Dorsolateral prefrontal cortex (tissue), 120 donors: ENCODE measurements at regions of chr2 and their contacts with region 1.

Region 1: DNA sequence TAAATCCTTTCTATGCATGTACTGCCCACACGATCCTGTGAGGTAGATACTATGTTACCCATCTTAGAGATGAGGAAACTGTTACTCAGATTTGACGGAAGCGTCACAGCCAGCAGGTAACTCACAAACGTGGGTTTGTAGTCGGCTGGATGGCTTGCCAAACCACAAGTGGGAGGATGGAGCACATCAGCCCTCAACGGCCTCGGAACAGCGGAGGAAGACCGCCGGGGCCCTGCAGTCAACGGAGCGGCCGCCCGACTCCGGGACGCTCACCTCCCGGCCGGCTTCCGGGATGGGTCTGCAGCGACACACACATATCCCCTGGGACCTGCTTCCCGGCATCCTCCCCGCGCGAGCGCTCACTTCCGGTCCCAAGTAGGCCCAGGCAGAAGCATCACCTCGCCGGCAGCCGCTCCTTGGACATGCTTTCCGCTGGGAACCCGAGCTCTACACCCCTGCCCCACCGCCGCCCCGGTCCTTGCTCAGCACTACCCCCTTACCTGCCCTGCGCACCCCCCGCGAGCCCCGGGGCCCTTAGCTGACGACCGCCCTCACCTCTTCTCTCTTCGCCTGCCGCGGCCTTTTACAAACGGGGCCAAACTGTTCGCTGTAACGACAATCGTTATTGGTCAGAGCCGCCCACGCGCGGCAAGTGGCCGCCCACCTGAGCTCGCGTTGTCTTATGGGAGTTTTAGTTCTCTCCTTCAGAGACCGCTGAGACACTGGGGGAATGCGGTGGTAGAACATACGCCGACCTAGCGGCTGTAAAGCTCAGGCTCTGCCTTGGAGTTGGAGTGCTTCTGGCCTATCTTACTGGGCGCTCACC is at the start of gene C2orf42:
- DNase-seq: peak; percentile 93 to 98 (median 96)
- H3K4me3 ChIP-seq: peak within 1 kb of the TSS; percentile 45 to 99 (median 86)
- H3K27ac ChIP-seq: peak within 1 kb of the TSS; percentile 87 to 99 (median 96)
- H3K27me3 ChIP-seq: no peaks in the 10 kb centered on the region
- CTCF ChIP-seq: peak in 30 of 56 donors; percentile 7 to 51 (median 22)
- total RNA-seq, gene C2orf42: 20.6 to 44.6 (median 32.0) TPM

Region 2: GRCh38 chr2:70086838-70087701 is 103.6 kb before region 1 on chr2 and contains the start of gene PCBP1:
- intact Hi-C with region 1: loop called in 1 of 2 experiments (anchors 2 kb)
- DNase-seq: peak; percentile 81 to 92 (median 88)
- H3K4me3 ChIP-seq: peak within 1 kb of the TSS; percentile 61 to 99 (median 92)
- H3K27ac ChIP-seq: peak within 1 kb of the TSS; percentile 100
- H3K27me3 ChIP-seq: no peaks in the 10 kb centered on the region
- CTCF ChIP-seq: peak in 2 of 56 donors; percentile 6 to 8
- total RNA-seq, gene PCBP1: 118 to 237 (median 174) TPM

Region 3: DNA sequence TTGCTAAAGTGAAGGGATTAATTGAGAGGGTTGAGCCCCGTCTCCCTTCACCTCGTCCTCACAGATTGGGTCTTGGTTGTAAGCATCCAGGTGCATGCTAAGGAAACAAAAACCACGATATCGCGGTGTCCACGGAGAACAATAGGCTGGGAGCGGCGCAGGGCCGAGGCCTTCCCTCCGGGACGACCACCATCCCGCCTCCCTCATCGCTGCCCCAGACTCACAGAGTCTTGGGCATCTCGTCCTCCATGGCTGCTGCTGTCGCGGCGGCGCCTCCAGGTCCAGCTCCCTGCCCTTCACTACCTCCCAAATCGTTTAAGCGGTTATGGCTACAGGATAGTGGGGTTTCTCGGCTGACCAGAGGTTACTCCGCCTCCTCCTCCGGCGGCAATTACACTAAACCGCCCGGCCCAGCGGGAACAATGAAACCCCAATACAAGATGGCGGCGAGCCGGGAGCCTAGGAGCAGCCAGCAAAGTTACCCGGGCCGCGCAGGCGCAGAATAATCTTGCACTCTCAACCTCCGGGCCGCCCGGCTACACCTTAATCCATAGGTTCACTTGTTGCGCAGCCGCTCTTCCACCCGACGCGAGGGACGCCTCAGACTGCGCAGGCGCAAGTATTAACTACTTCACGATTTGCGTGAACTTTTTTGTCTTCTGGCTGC is 57.7 kb after region 1 on chr2 and contains the start of gene TIA1:
- intact Hi-C with region 1: loop called (anchors 2 kb)
- DNase-seq: peak; percentile 91 to 96 (median 94)
- H3K4me3 ChIP-seq: peak within 1 kb of the TSS; percentile 62 to 100 (median 92)
- H3K27ac ChIP-seq: peak within 1 kb of the TSS; percentile 77 to 100 (median 98)
- H3K27me3 ChIP-seq: no peaks in the 10 kb centered on the region
- CTCF ChIP-seq: peak in 8 of 56 donors; percentile 4 to 35 (median 14)
- total RNA-seq, gene TIA1: 80.0 to 187 (median 133) TPM